HEK293 (cell line): ENCODE measurements at regions of chr12 and their contacts with region 1.

Region 1: DNA sequence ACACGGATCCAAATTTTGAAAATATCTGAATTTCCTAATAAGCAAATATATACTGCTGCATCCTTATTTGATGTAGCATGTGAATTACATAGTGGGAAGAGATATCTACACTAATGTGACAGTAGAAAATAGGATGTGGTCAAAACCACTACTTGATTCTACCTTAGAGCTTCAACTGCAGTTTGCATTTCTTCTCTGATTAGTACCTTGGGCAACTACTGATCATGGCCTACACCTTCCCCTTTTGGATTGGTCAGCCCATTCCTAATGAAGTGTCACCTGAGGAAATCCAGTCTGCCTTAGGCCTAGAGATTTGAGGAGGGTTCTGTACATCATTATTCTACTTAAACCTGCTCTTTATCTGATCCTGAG is 10.7 kb downstream of the LLPH start:
- H3K4me3 ChIP-seq: no peak overlapping the region
- H3K27ac ChIP-seq: no peak overlapping the region
- H3K4me1 ChIP-seq: no peaks in the 10 kb centered on the region
- CTCF ChIP-seq: no peak

Region 2: DNA sequence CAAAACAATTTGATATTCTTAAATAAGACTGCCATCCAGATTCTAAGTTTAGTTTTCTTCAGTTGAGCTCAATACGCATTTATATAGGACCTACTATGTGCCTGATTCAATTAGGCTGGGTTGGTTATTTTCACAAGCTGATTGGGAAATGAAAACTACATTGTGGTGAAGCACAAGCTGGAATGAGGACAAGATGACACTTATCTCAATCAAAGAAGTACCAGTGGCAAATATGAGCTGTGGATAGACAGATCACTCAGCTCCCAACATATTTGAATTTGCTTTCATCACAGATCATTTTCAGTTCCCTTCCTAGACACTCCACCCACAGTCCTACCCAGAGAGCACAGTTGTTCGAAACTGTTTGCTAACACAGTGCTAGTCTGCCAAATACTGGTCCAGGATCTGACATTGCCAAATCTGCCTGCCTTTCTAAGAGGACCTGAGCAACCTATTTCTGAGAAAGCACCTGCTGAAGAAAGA is 64.0 kb before region 1 on chr12:
- CTCF ChIA-PET with region 1: no interaction called
- POLR2A ChIA-PET with region 1: no interaction called
- H3K4me3 ChIP-seq: no peak overlapping the region
- H3K27ac ChIP-seq: no peak overlapping the region
- H3K4me1 ChIP-seq: peaks cover 13% of the 10 kb centered on the region
- CTCF ChIP-seq: no peak

Region 3: DNA sequence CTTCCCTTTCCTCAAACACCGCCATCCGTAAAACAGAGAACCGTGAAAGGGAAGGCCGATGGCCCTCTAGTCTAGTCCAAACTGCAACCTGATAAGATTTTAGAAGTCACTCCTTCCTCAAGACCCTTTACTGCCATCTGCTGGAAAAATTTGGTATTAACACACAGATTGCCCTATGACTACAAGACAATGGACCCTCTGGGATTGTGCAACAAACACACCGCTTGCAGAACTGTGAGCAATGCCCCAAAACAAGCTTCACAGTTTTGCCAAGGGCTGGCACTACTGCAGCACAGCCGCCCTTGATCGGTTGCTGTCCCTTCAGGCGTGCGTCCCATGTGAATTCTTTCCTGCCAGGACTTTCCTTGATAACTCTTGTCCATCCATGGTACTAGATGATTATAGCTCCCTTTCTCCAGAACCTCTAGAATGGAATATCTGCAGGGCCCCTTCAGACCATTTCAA is 12.4 kb before region 1 on chr12:
- CTCF ChIA-PET with region 1: interaction called, 15 read pairs
- POLR2A ChIA-PET with region 1: no interaction called
- H3K4me3 ChIP-seq: no peak overlapping the region
- H3K27ac ChIP-seq: 0 out of 2 replicates have a peak overlapping the region, but pooled peaks have one; percentile 25
- H3K4me1 ChIP-seq: peaks cover 5% of the 10 kb centered on the region; the same call in 1 of the 2 replicates
- CTCF ChIP-seq: peak; percentile 61; the same call in 1 of the 2 replicates

Region 4: DNA sequence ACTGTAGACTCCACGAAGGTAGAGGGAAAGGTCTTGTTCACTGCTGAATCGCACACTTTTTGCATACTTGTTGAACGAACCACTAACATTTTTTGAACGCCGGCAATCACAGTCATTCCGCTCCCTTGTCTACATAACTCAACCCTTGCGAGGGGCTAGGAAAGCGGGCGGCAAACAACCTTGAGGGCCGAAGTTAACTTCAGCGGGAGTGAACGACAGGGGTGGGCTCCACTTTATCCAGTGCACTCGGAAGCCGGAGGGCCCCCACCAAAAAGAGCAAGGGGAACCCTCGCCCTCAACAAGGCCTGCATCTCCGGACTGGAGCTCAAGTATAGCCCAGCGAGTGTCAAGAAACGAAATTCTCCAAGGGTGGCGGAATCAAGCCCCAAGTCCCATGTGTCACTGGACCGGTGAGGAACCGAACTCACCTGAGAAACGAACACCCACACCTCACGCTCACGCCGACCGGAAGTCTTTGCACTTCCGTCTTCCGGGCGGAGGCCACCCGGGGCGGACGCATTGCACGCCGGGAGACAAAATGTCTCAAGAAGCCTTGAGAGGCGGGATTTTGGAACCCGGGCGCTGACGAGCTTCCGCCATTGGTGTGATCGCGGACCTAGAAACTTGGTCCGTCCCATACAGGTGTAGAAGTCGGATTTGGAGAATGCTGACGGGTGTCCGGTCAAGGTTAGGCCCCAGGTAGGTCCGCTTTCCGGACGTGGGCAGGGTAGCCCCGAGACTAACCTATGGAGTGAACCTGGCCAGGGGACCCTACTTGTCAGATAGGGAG is 10.6 kb after region 1 on chr12 and contains the start of gene LLPH:
- CTCF ChIA-PET with region 1: no interaction called
- POLR2A ChIA-PET with region 1: interaction called, 13 read pairs
- H3K4me3 ChIP-seq: peak within 1 kb of the TSS; percentile 99
- H3K27ac ChIP-seq: peak within 1 kb of the TSS; percentile 70
- H3K4me1 ChIP-seq: no peaks in the 10 kb centered on the region
- CTCF ChIP-seq: no peak

Region 5: GRCh38 chr12:66140731-66141130 is 20.9 kb after region 1 on chr12:
- CTCF ChIA-PET with region 1: no interaction called
- POLR2A ChIA-PET with region 1: no interaction called
- H3K4me3 ChIP-seq: no peak overlapping the region
- H3K27ac ChIP-seq: no peak overlapping the region
- H3K4me1 ChIP-seq: no peaks in the 10 kb centered on the region
- CTCF ChIP-seq: no peak